AG04449 (cell line): ENCODE measurements at regions of chr11 and their contacts with region 1.

Region 1: DNA sequence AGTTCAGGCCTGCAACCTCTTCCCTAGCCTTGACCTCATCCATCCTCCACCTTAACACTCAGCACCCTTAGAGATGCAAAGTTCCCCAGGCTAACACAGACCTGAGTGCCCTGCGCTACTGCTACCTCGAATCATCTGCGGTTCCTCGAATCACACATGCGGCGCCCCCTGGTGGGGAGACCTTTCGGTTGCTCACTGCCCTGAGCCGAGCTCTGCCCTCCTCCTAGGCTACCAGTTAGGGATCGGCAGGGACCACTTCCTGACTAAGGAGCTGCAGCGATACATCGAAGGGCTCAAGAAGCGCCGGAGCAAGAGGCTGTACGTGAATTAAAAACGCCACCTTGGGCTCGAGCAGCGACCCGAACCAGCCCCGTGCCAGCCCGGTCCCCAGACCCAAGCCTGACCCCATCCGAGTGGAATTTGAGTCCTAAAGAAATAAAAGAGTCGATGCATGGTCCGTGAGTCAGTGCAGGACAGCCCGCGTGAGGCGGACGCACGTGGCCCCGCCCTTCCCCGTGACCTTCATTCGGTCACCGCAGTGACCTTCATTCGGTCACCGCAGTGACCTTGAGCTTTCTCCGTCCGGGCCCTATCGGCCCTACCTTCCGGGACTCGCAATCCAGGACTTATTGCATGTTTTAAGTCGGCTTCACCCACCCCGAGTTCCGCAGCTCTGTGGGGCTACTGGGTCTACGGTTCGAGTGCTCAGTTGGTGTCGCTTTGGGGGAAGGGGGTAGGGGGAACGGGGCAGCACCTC is 830 bp upstream of the ESRRA start:
- DNase-seq: no peak
- H3K4me3 ChIP-seq: peak overlapping the region; percentile 73
- CTCF ChIP-seq: peak; percentile 93

Region 2: GRCh38 chr11:64036087-64037026 is 268.1 kb before region 1 on chr11:
- CTCF ChIA-PET with region 1: no interaction called
- POLR2A ChIA-PET with region 1: no interaction called
- DNase-seq: no peak
- H3K4me3 ChIP-seq: peak overlapping the region; percentile 54
- CTCF ChIP-seq: no peak

Region 3: GRCh38 chr11:64196626-64197025 is 107.9 kb before region 1 on chr11:
- CTCF ChIA-PET with region 1: interaction called, 305 read pairs
- POLR2A ChIA-PET with region 1: no interaction called
- DNase-seq: no peak
- H3K4me3 ChIP-seq: no peak overlapping the region
- CTCF ChIP-seq: no peak

Region 4: GRCh38 chr11:64225612-64226506 is 78.6 kb before region 1 on chr11 and contains the starts of genes NUDT22 and TRPT1:
- CTCF ChIA-PET with region 1: interaction called, 10 read pairs
- POLR2A ChIA-PET with region 1: no interaction called
- DNase-seq: no peak
- H3K4me3 ChIP-seq: peak within 1 kb of the TSS; percentile 91
- CTCF ChIP-seq: peak; percentile 27

Region 5: DNA sequence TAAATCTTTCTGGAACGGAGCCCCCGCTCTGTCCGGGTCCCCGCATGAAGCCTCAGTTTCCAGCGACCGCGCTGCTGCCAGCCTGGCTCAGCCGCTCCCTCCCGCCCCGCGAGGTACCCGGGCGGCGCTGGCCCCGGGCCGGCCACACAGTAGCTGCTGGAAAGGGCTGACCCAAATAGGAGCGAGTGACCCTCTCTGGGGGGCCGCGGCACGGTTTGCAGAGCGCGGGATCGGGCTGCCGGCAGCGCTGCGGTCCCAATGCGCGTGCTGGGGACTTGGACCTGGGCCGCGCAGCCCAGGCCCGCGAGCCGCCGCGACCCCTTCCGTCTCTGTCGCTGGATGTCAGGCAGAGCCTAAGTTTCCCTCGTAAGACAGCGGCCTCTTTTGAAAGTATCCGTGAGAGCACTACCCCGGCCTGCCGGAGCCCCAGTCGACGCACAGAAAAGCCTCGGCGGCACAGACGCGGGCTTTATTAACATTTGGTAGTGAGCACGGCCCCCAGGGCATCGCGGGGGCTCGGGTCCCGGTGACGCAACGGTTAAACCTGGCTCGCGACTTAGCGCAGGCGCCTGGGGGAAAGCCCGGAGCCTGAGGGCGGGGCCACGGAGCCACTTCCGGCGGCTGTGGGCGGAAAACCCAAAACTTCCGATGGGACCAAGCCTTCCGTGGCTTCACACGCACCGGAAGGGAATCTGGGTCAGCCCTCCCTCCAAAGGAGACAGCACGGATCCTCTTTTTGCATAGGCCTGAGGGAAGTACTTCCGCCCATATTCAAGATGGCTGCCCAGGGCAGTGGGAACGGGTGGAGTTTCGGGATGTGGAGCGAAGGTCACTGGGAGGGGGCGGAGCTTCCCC is 34.9 kb before region 1 on chr11:
- CTCF ChIA-PET with region 1: interaction called, 107 read pairs
- POLR2A ChIA-PET with region 1: interaction called, 12 read pairs
- DNase-seq: peak; percentile 99
- H3K4me3 ChIP-seq: peak overlapping the region; percentile 69
- CTCF ChIP-seq: no peak

Region 6: GRCh38 chr11:64317957-64318693 is 13.6 kb after region 1 on chr11 and contains the start of gene PRDX5:
- CTCF ChIA-PET with region 1: interaction called, 111 read pairs
- POLR2A ChIA-PET with region 1: interaction called, 12 read pairs
- DNase-seq: peak; percentile 59
- H3K4me3 ChIP-seq: peak within 1 kb of the TSS; percentile 96
- CTCF ChIP-seq: peak; percentile 50

Region 7: DNA sequence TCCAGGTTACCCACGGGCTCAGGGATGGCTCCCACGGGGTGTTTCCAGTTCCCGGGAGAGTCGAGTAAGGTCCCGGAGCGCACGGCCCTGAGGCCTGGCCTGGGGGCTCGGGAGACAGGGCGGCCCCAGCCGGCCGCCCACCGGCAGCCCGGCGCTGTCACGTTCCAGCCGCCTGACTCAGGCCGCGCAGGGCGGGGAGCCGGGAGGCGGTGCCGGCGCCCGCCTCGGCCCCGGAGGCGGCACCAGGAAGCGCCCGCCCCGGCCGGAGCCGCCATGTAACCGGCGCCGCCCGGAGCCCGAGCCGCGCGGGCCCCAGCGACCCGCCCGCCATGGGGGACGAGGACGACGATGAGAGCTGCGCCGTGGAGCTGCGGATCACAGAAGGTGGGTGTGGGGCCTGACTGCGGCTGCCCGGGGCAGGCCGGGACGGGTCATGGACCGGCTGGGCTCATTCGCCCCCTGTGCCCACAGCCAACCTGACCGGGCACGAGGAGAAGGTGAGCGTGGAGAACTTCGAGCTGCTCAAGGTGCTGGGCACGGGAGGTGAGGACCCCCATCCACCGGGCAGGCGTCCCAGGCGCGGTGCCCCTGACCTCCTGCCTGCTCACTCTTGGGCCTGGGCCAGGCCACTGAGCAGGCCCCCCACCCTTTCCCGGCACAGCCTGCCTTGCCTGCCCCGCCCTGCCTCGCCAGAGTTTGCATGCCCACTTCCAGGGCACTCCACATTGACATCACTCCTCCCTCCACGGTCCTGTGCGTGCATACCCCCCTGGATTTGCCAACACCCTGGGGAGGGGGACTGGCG is 54.6 kb after region 1 on chr11 and contains the start of gene RPS6KA4:
- CTCF ChIA-PET with region 1: interaction called, 127 read pairs
- POLR2A ChIA-PET with region 1: no interaction called
- DNase-seq: no peak
- H3K4me3 ChIP-seq: peak within 1 kb of the TSS; percentile 94
- CTCF ChIP-seq: no peak

Region 8: GRCh38 chr11:64656862-64657261 is 352.4 kb after region 1 on chr11:
- CTCF ChIA-PET with region 1: no interaction called
- POLR2A ChIA-PET with region 1: no interaction called
- DNase-seq: no peak
- H3K4me3 ChIP-seq: no peak overlapping the region
- CTCF ChIP-seq: no peak